ENCODE measurements at regions of chr16 and their contacts with region 1.

Region 1: DNA sequence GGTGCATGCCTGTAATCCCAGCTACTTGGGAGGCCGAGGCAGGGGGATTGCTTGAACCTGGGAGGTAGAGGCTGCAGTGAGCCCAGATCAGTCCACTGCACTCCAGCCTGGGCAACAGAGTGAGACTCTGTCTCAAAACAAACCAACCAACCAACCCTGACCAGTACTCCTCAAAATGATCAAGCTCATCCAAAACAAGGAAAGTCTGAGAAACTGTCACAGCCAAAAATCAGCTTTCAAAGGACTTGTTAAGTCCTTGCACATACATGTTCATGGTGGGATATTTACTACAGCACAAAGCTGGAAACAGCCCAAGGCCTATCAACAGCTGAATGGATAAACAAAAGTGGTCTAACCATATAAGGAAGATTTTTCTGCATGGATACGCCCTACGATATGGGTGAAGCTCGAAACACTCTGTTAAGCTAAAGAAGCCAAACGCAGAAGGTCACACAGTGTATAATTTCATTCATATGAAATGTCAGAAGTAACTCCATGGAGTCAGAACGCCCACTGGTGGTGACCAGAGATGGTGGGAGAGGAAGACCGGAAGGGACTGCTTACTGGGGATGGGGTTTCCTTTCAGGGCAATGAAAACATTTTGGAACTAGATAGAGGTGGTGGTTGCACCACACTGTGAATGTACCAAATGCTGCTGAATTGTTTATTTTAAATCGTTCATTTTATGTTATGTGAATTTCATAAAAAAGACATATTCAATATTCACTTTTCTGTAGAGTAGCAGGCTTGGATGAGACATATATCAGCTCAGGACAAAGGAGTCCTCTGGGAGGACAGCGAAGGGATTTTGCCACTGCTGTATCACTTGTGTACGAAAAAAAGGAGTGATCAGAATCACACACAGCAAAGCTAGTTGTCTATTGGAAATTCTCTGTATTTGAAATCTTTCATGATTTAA is 17.7 kb downstream of the CCL17 start:
- DNase-seq: peak in 1 of 2 donors; percentile 58
- ATAC-seq: peak; percentile 55

Region 2: GRCh38 chr16:57084257-57084770 is 338.0 kb before region 1 on chr16:
- intact Hi-C with region 1: loop called in 1 of 2 experiments (anchors 10 kb)
- DNase-seq: peak; percentile 65 to 70
- ATAC-seq: peak; percentile 78

Region 3: DNA sequence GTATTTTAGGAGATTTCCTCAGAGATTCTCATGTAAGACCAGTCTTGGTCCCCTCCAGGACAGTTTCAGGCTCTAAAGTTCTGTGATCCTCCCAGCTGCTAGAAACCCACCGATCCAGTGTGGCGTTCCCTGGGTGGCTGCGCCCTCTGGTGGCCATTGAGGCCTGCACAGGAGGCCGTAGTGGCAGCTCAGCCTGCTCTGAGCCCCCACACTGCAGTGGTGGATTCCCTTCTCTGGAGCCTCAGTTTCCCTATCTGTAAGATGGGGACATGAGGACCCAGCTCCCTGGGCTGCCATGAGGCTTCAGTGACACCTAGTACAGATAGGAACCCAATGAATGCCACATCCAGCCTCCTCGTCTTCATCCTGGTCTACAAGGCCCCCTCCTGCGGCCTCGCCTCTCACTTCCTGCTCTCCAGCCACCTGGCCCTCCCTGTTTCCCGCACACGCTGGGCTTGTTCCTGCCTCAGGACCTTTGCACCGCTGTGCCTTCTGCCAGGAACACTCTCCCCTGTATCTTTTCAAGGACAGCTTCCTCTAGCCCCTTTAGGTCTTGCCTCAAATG is 97.6 kb after region 1 on chr16:
- intact Hi-C with region 1: loop called in 1 of 2 experiments (anchors 5 kb)
- DNase-seq: peak in 1 of 2 donors; percentile 87
- ATAC-seq: peak; percentile 84

Measured in left colon (tissue), 2 donors.